Left colon (tissue), 2 donors: ENCODE measurements at regions of chr12 and their contacts with region 1.

Region 1: GRCh38 chr12:10771132-10771733 is 31.2 kb downstream of the TAS2R7 start:
- DNase-seq: no peak
- ATAC-seq: peak; percentile 59

Region 2: DNA sequence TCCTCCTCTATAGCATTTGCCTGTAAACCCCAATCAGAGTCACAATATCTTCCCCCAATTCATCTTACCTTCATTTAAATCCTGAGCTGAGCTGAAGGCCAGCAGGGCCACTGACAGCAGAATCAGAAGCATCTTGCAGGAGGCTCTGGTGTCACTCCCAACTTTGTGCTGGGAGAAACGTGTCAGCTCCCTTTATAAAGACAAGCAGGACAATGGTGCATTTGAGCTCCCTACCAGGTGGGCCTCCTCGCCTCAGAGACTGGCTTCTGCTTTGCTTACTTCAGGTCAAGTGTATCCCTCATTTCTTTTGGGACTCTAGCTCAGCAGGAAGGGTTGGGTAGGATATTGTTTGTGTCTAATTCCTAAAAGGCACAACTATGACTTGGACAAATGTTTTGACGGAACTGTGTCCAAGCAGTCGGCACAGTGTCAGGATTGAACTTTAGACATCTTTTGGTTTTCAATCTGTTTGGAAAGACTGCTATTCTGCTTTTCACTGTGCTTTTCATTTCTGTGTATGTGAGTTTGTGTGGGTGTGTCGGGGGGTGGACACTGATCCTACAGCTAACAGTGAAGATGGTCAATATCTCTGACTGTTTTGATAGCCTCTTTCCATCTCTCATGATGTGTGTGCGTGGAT is 113.0 kb after region 1 on chr12 and contains the start of gene PRH1:
- intact Hi-C with region 1: no loop called
- DNase-seq: no peak
- ATAC-seq: no peak
- total RNA-seq, gene PRH1: 10.6 to 13.8 TPM

Region 3: GRCh38 chr12:11202811-11203210 is 431.6 kb after region 1 on chr12:
- intact Hi-C with region 1: loop called in 1 of 2 experiments (anchors 2 kb)
- DNase-seq: no peak
- ATAC-seq: no peak

Region 4: DNA sequence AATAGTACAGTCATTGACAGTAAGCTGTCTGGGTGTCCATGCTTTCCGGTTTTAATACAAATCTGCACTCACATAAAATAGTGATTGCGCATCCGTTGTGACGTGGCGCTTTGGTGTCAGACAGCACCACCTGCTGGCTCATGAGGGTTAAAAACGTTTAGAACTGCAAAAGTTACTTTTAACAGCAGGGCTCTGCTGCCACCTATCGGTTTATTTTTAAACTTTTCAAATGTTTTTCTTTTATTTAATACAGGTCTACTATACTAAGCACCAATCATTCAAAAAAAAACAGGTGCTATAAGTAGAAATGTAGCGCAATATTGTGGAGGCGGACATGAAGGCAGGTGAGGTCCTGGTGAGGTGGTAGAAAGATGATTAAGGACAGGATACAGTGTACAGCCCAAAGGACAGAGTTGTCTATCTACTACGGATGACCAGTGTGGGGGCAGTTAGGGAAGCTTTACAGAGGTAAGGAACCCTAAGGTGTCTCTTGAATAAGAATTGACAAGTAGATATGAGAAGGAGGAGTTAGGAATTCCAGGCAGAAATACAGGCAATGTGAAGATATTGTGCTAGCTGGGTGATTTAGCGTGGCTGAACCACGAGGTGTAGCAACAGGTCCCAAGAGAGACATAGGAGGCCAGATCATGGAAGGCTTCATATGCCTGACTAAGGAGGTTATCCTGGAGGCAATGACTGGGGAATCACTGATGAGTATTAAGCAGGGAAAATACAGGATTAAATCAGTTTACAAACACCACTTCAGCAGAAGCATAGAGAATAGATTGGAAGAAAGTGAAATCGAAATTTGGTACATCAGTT is 715.6 kb after region 1 on chr12:
- intact Hi-C with region 1: loop called in 1 of 2 experiments (anchors 5 kb)
- DNase-seq: peak; percentile 58 to 80
- ATAC-seq: peak; percentile 85